HCT116 (cell line): ENCODE measurements at regions of chr16 and their contacts with region 1.

Region 1: GRCh38 chr16:19410435-19411161 is 7.1 kb upstream of the TMC5 start:
- DNase-seq: no peak
- ATAC-seq: peak; percentile 83
- H3K4me3 ChIP-seq: peak overlapping the region; percentile 62
- H3K27ac ChIP-seq: peak overlapping the region; percentile 83
- H3K4me1 ChIP-seq: peaks cover 29 to 52% of the 10 kb centered on the region in 2 experiments
- H3K27me3 ChIP-seq: no peaks in the 10 kb centered on the region
- CTCF ChIP-seq: peak in 2 of 3 experiments; percentile 27 to 40; a peak in 4 of 6 replicates
- POLR2A ChIP-seq: no peak
- RAD21 ChIP-seq: peak; percentile 44

Region 2: GRCh38 chr16:19179546-19180490 is 230.8 kb before region 1 on chr16:
- CTCF ChIA-PET with region 1: no interaction called
- POLR2A ChIA-PET with region 1: no interaction called
- RAD21 ChIA-PET with region 1: no interaction called
- intact Hi-C with region 1: no loop called
- DNase-seq: peak; percentile 31
- ATAC-seq: peak; percentile 95
- H3K4me3 ChIP-seq: no peak overlapping the region
- H3K27ac ChIP-seq: no peak overlapping the region
- H3K4me1 ChIP-seq: no peaks in the 10 kb centered on the region
- H3K27me3 ChIP-seq: no peaks in the 10 kb centered on the region
- CTCF ChIP-seq: peak; percentile 71 to 91 (median 82)
- POLR2A ChIP-seq: no peak
- RAD21 ChIP-seq: peak; percentile 67

Region 3: GRCh38 chr16:19196871-19197270 is 213.7 kb before region 1 on chr16:
- CTCF ChIA-PET with region 1: no interaction called
- POLR2A ChIA-PET with region 1: no interaction called
- RAD21 ChIA-PET with region 1: no interaction called
- intact Hi-C with region 1: no loop called
- DNase-seq: no peak
- ATAC-seq: no peak
- H3K4me3 ChIP-seq: no peak overlapping the region
- H3K27ac ChIP-seq: no peak overlapping the region
- H3K4me1 ChIP-seq: no peaks in the 10 kb centered on the region
- H3K27me3 ChIP-seq: no peaks in the 10 kb centered on the region
- CTCF ChIP-seq: no peak
- POLR2A ChIP-seq: no peak
- RAD21 ChIP-seq: no peak

Region 4: DNA sequence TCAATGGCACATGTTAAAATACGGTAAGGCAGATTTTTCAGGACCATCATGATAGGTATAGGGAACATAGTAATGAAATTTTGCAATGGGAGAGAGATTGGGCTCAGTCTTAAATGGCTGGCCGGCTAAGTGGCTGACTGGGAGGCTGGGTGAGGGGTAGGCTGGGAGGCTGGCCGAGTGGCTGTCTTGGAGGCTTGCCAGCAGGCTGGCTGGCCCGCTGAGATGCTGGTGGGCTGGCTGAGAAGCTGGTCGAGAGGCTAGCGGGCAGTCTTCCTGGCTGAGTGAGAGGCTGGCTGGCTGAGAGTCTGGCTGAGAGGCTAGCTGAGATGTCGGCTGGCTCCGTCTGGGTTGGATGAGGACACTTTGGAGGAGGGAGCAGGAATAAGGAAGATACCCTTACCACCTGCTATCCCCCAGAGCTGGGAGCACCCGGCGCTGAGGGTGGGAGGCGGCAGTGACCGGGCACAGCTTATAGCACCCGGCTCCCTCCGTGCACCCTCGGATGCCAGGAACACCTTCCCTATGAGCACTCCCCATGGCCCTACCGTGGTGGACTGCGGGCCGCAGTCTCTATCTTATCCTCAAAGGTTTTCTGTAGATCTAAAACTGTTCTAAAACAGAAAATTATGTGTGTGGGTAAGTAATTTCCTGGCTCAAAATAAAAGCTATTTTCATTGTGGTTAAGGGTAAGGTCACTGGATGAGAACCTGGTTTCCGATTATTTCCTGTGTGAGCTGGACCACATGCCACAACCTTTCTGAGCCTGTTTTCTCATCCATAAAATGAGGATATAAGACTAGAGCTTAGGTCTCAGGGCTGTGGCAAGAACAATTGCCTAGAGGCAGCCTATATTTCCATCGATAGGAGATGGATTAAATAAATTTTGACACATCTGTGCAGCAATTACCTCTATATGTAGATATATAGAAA is 27.4 kb before region 1 on chr16:
- CTCF ChIA-PET with region 1: no interaction called
- POLR2A ChIA-PET with region 1: interaction called, 10 read pairs
- RAD21 ChIA-PET with region 1: no interaction called
- intact Hi-C with region 1: no loop called
- DNase-seq: no peak
- ATAC-seq: no peak
- H3K4me3 ChIP-seq: no peak overlapping the region
- H3K27ac ChIP-seq: no peak overlapping the region
- H3K4me1 ChIP-seq: peaks cover 34 to 51% of the 10 kb centered on the region in 2 experiments
- H3K27me3 ChIP-seq: no peaks in the 10 kb centered on the region
- CTCF ChIP-seq: no peak
- POLR2A ChIP-seq: no peak
- RAD21 ChIP-seq: no peak

Region 5: GRCh38 chr16:19389246-19389645 is 21.4 kb before region 1 on chr16:
- CTCF ChIA-PET with region 1: interaction called, 5 read pairs
- POLR2A ChIA-PET with region 1: interaction called, 12 read pairs
- RAD21 ChIA-PET with region 1: no interaction called
- intact Hi-C with region 1: no loop called
- DNase-seq: no peak
- ATAC-seq: peak; percentile 59
- H3K4me3 ChIP-seq: no peak overlapping the region
- H3K27ac ChIP-seq: no peak overlapping the region
- H3K4me1 ChIP-seq: peaks cover 39 to 55% of the 10 kb centered on the region in 2 experiments
- H3K27me3 ChIP-seq: no peaks in the 10 kb centered on the region
- CTCF ChIP-seq: peak; percentile 58 to 67 (median 63); a peak in 5 of 6 replicates
- POLR2A ChIP-seq: no peak
- RAD21 ChIP-seq: peak; percentile 85